ENCODE measurements at regions of chr3 and their contacts with region 1.

Region 1: GRCh38 chr3:88003115-88003755 is 55.6 kb downstream of the CGGBP1 start:
- DNase-seq: peak; percentile 49
- H3K4me3 ChIP-seq: no peak overlapping the region
- H3K27ac ChIP-seq: no peak overlapping the region
- H3K4me1 ChIP-seq: peaks cover under 1% of the 10 kb centered on the region
- CTCF ChIP-seq: peak; percentile 96

Region 2: GRCh38 chr3:87298111-87298718 is 705.0 kb before region 1 on chr3:
- CTCF ChIA-PET with region 1: interaction called, 3 read pairs
- POLR2A ChIA-PET with region 1: no interaction called
- intact Hi-C with region 1: loop called (anchors 2 kb)
- DNase-seq: peak; percentile 38
- H3K4me3 ChIP-seq: no peak overlapping the region
- H3K27ac ChIP-seq: no peak overlapping the region
- H3K4me1 ChIP-seq: no peaks in the 10 kb centered on the region
- CTCF ChIP-seq: peak; percentile 92

Region 3: GRCh38 chr3:87350364-87351199 is 652.7 kb before region 1 on chr3:
- CTCF ChIA-PET with region 1: interaction called, 3 read pairs
- POLR2A ChIA-PET with region 1: no interaction called
- intact Hi-C with region 1: loop called (anchors 2 kb)
- DNase-seq: peak; percentile 64
- H3K4me3 ChIP-seq: no peak overlapping the region
- H3K27ac ChIP-seq: no peak overlapping the region
- H3K4me1 ChIP-seq: no peaks in the 10 kb centered on the region
- CTCF ChIP-seq: peak; percentile 96

Region 4: DNA sequence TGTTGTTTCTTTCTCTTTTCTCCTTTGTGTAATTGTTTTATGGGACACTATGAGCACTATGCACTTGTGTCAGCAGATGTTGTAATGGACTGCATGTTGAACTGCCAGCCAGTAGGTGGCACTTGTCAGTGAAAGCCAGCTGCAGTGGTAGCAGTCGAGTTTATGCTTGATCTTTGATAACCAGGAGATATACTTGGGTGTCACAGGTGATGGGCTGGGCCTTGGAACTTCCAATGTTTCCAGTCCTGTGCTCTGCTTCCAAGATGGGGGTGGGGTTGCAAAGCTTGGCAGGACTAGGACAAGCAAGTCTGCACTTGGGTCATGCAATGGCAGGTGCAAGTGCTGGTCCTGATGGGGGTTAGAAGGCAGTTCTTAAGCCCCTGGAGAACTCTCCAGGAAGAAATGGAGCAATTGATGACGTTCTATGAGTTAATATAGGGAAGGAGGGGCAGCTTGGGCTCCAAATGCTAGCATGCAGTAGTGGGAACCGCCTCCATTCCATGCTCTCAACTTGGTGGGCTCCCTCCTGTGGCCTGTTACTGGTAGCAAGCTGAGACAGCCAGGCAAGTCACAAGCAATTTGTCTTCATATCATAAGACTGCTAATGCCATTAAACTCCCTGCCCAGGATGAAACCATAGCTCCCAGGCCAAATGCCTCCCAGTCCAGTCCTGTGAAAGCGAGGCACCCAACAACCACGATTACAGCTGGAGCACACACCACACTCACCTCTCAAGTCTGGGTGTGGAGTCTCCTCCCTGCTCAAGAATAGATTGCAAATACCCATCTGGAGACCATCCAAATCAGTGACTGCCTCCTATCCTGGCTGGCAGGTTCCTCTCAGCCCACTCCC is 231.7 kb before region 1 on chr3:
- CTCF ChIA-PET with region 1: no interaction called
- POLR2A ChIA-PET with region 1: no interaction called
- intact Hi-C with region 1: loop called (anchors 1 kb)
- DNase-seq: peak; percentile 51
- H3K4me3 ChIP-seq: no peak overlapping the region
- H3K27ac ChIP-seq: no peak overlapping the region
- H3K4me1 ChIP-seq: no peaks in the 10 kb centered on the region
- CTCF ChIP-seq: peak; percentile 88

Region 5: GRCh38 chr3:87900061-87900460 is 103.2 kb before region 1 on chr3:
- CTCF ChIA-PET with region 1: no interaction called
- POLR2A ChIA-PET with region 1: interaction called, 4 read pairs
- intact Hi-C with region 1: loop called (anchors 5 kb)
- DNase-seq: peak; percentile 12
- H3K4me3 ChIP-seq: no peak overlapping the region
- H3K27ac ChIP-seq: no peak overlapping the region
- H3K4me1 ChIP-seq: no peaks in the 10 kb centered on the region
- CTCF ChIP-seq: peak; percentile 68

Region 6: GRCh38 chr3:88058591-88059368 is 55.5 kb after region 1 on chr3 and contains the starts of genes CGGBP1 and ZNF654:
- CTCF ChIA-PET with region 1: no interaction called
- POLR2A ChIA-PET with region 1: no interaction called
- intact Hi-C with region 1: no loop called
- DNase-seq: peak; percentile 98
- H3K4me3 ChIP-seq: peak within 1 kb of the TSS; percentile 84
- H3K27ac ChIP-seq: peak within 1 kb of the TSS; percentile 68
- H3K4me1 ChIP-seq: peaks cover 29% of the 10 kb centered on the region
- CTCF ChIP-seq: no peak
- total RNA-seq, gene CGGBP1: 52.8 and 54.4 TPM in 2 replicates
- total RNA-seq, gene ZNF654: 5.4 and 5.6 TPM in 2 replicates

Region 7: GRCh38 chr3:88113311-88114162 is 110.3 kb after region 1 on chr3:
- CTCF ChIA-PET with region 1: no interaction called
- POLR2A ChIA-PET with region 1: no interaction called
- intact Hi-C with region 1: loop called (anchors 2 kb)
- DNase-seq: peak; percentile 72
- H3K4me3 ChIP-seq: no peak overlapping the region
- H3K27ac ChIP-seq: no peak overlapping the region
- H3K4me1 ChIP-seq: no peaks in the 10 kb centered on the region
- CTCF ChIP-seq: peak; percentile 92

Region 8: GRCh38 chr3:88180398-88180999 is 177.3 kb after region 1 on chr3:
- CTCF ChIA-PET with region 1: no interaction called
- POLR2A ChIA-PET with region 1: interaction called, 4 read pairs
- intact Hi-C with region 1: loop called (anchors 2 kb)
- DNase-seq: peak; percentile 68
- H3K4me3 ChIP-seq: no peak overlapping the region
- H3K27ac ChIP-seq: no peak overlapping the region
- H3K4me1 ChIP-seq: no peaks in the 10 kb centered on the region
- CTCF ChIP-seq: peak; percentile 83

Measured in OCI-LY7 (cell line).